ENCODE measurements at regions of chr15 and their contacts with region 1.

Region 1: DNA sequence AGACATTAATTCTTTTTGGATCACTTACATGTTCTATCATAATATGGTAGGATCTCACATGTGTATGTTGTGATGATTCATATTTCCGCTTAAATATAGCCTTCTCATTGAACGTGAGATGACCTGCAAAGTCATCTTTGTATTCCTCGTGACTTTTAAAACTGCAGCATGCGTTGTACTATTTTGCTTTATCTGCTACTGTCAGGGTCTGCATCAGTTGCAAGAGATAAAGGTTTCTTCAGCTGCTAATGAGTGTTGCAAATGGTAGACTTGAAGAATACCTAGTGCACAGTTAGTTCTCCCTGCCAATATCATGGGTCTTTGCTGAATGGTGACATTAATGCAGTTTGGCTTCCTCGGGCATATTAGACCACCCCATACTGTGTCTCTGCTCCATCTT is 31.8 kb downstream of the REC114 start:
- DNase-seq: no peak
- ATAC-seq: no peak
- H3K4me3 ChIP-seq: no peak overlapping the region
- H3K27ac ChIP-seq: no peak overlapping the region
- H3K4me1 ChIP-seq: no peaks in the 10 kb centered on the region
- H3K27me3 ChIP-seq: peaks cover 5% of the 10 kb centered on the region; the same call in 1 of the 2 replicates
- CTCF ChIP-seq: no peak

Region 2: GRCh38 chr15:73414876-73415275 is 59.9 kb before region 1 on chr15:
- CTCF ChIA-PET with region 1: no interaction called
- POLR2A ChIA-PET with region 1: no interaction called
- in situ Hi-C with region 1: no loop called
- intact Hi-C with region 1: loop called (anchors 10 kb)
- DNase-seq: no peak
- ATAC-seq: no peak
- H3K4me3 ChIP-seq: no peak overlapping the region
- H3K27ac ChIP-seq: no peak overlapping the region
- H3K4me1 ChIP-seq: no peaks in the 10 kb centered on the region
- H3K27me3 ChIP-seq: peaks cover 12% of the 10 kb centered on the region
- CTCF ChIP-seq: no peak

Region 3: DNA sequence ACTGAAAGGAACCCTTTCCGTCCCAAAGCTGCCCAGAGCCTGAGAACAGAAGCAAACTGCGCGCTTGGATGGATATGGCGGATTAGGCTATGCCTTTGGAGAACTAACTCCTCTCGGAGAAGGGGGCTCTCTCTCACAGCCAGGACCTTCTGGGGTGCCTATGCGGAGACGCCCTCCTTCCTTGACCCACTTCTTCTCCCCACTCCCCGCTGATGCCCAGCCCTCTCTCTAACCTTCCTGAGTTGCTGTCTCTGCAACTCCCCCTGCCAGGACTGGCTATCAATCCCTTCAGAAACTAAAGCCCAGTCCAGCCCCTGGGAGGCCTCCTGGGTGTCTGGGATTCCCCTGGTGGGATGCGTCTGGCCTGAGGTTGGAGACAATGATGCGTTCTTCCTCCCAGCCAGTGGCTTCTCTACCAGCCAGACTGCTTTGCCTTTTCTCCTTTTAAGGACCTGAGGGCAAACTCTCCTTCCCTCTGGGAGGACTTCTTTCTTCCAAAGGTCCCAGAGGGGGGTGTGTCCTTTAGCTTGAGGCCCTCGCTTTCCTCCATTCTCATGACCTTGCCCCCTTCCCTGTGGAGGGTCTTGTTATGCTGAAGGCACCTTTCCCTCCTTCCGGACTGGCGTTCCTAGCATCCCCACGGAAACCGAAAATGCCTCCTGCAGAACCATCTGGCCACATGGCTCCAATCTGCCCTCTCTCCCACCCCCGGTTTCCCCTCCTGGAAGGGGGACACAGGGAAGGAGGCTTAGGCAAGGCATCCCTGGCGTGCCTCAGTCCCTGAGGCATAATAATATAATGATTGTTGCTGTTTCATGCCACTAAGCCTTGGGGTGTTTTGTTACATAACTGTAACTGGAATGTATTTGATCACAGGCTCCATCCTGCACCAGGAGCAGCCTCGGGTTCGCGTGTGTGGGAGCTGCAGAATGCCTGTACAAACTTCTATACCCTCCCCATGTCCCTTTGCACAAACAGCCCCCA is 1663.5 kb after region 1 on chr15:
- CTCF ChIA-PET with region 1: no interaction called
- POLR2A ChIA-PET with region 1: no interaction called
- in situ Hi-C with region 1: no loop called
- intact Hi-C with region 1: no loop called
- DNase-seq: no peak
- ATAC-seq: no peak
- H3K4me3 ChIP-seq: no peak overlapping the region
- H3K27ac ChIP-seq: no peak overlapping the region
- H3K4me1 ChIP-seq: no peaks in the 10 kb centered on the region
- H3K27me3 ChIP-seq: no peaks in the 10 kb centered on the region
- CTCF ChIP-seq: no peak